ENCODE measurements at regions of chr16 and their contacts with region 1.

Region 1: GRCh38 chr16:85168732-85169256 is 56.5 kb upstream of the CIBAR2 start:
- DNase-seq: peak in 7 of 42 donors; percentile 20 to 75 (median 25)

Region 2: DNA sequence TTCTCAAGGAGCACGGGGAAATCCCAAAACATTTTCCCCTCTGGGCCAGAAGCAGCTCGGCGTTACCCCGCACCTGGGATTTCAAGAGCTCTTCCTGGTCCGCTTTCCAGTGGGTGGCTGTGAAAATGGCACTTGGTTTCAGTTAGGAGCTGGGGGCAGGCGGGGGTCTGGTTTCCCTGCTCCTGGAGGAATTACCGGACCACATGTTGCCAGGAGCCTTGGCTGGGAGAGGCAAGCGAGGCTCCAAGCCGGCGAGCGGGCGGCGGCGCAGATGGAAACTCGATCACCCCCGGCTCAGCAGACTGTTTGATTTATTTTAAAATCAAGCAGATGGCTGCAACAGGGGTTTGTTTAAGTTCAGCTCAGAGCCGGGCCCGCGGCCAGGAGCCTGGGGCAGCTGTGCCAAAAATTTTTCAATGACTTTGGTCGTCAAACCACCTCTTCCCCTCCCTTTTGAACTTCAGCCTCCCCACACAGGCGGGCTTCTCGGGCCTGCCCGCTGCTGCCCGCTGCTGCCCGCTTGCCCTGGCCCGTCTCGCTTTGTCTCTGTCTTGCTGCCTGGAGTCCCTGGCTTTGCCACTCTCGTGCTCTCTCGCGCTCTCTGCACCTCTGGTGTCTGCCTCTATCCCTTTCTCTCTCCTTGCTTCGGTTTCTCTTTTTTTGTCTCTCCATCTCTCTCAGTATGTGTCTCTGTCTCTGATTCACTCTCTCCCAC is 51.5 kb after region 1 on chr16:
- intact Hi-C with region 1: loop called (anchors 10 kb)
- DNase-seq: peak in 41 of 42 donors; percentile 19 to 73 (median 50)

Region 3: DNA sequence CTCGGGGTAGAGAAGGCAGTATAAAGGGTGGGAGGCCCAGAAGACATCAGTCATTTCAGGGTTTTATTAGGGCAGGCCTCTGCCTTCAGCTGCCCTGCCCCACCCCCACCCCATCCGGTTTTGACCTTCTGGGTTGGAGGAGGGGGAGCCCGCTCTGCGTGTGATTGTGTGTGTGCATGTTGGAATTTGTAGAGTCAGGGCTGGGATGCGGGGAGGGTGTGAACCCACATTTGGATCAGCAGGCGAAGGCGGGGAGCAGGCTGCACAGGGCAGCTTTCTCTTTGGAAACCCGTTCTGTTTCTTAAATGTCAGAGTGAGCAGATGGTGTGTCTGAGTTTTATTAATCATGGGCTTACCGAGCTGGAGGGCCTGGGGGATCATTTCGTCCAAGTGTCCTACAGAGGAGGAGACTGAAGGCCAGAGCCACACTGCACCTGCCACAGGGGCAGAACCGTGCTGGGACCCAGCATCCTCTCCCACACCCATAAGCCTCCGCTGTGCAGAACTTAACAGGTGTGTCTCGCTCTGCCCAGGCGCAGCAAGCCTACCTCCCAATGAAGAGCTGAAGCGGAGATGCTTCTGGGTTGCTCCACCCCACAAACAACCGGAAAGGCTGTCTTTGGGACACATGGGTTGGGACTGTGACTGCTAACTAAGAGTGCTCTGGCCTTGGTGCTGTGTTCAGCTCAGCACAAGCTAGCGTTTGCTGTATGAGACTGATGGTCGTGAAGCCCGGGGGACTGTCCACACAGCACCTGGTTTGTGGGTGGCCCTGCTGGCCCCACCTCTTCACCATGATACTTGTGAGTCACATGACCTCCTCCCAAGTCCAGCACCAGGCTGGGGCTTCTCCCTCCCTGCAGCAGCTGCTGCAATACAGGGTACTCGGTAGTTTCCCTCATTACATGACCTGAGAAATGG is 373.4 kb after region 1 on chr16:
- intact Hi-C with region 1: no loop called
- DNase-seq: no peak

Measured in head of caudate nucleus (tissue), 42 donors.